HCT116 (cell line): ENCODE measurements at regions of chr1 and their contacts with region 1.

Region 1: DNA sequence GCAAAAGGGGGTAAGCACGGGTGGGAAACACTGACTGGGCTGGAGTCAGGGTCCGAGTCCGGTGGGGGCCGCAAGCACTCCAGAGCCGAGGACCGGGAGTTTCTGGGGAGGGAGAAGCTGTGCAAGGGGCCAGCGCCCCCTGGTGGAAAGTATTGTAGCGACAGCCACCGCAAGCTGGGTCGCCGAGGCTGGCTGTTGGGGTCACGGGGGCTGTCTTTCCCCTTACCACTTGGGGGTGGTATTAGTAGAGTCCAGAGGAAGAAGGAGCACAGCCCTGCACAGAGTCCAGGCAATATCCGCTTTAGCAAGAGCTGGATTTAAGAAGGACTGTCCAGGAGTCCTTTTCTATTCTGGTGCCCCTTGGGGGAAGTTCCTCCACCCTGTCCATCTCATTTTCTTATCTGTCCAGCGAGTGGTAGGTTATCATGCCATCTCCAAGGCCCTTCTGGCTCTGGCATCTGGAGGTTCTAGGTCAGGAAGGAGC is 17.9 kb upstream of the ETV3 start:
- DNase-seq: peak; percentile 48
- ATAC-seq: peak; percentile 93
- H3K4me3 ChIP-seq: peak overlapping the region; percentile 23 to 32; a peak in 3 of 4 replicates
- H3K27ac ChIP-seq: no peak overlapping the region
- H3K4me1 ChIP-seq: peaks cover 8 to 29% of the 10 kb centered on the region in 2 experiments; a peak in 3 of 4 replicates
- H3K27me3 ChIP-seq: no peaks in the 10 kb centered on the region
- CTCF ChIP-seq: peak; percentile 88 to 97 (median 91)
- POLR2A ChIP-seq: no peak
- RAD21 ChIP-seq: peak; percentile 92

Region 2: GRCh38 chr1:157050836-157051235 is 105.3 kb before region 1 on chr1:
- CTCF ChIA-PET with region 1: no interaction called
- POLR2A ChIA-PET with region 1: no interaction called
- RAD21 ChIA-PET with region 1: no interaction called
- intact Hi-C with region 1: no loop called
- DNase-seq: no peak
- ATAC-seq: no peak
- H3K4me3 ChIP-seq: no peak overlapping the region
- H3K27ac ChIP-seq: no peak overlapping the region
- H3K4me1 ChIP-seq: peaks cover 3 to 6% of the 10 kb centered on the region in 2 experiments; a peak in 3 of 4 replicates
- H3K27me3 ChIP-seq: no peaks in the 10 kb centered on the region
- CTCF ChIP-seq: no peak
- POLR2A ChIP-seq: no peak
- RAD21 ChIP-seq: no peak

Region 3: GRCh38 chr1:157138220-157139051 is 17.7 kb before region 1 on chr1 and contains the start of gene ETV3:
- CTCF ChIA-PET with region 1: interaction called, 18 read pairs
- POLR2A ChIA-PET with region 1: no interaction called
- RAD21 ChIA-PET with region 1: no interaction called
- intact Hi-C with region 1: no loop called
- DNase-seq: peak; percentile 76
- ATAC-seq: peak; percentile 92
- H3K4me3 ChIP-seq: peak within 1 kb of the TSS; percentile 91 to 94
- H3K27ac ChIP-seq: peak within 1 kb of the TSS; percentile 60
- H3K4me1 ChIP-seq: peaks cover 13 to 25% of the 10 kb centered on the region in 2 experiments
- H3K27me3 ChIP-seq: no peaks in the 10 kb centered on the region
- CTCF ChIP-seq: no peak
- POLR2A ChIP-seq: peak; percentile 37
- RAD21 ChIP-seq: no peak
- total RNA-seq, gene ETV3: 21.2 TPM